ENCODE measurements at regions of chr7 and their contacts with region 1.

Region 1: DNA sequence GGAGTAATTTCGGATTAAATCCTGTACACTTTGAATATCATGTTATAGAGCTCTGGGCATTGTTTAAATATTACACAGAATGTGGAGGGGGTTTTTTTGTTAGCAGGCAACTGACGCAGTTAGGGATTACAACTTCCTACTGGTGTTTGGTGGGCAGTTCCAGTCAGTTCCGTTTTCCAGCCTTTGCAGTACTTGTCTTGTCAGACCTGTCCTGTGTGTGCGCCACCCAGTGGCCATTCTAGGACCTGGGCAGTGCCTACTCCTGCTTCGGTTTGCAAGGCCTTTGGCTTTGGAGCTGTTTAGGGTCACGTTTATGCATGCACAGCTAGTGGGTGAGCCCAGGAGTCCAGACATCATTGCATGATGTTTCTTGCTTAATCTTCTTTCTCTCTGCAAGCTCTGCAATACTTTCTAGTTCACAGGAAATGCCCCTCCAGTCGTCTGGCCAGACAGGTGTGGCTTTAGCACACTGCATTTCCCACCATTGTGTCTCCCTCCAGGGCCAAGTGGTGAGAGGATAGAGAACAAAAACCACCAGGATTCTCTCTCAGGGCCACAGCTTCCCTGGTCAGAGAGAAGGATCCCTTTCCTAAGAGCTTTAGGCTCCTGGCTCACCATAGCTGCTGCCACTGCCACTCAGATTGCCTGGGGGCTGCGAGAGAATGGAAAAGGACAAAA is 96.5 kb upstream of the TARP start:
- DNase-seq: no peak
- ATAC-seq: peak; percentile 87
- H3K4me3 ChIP-seq: no peak overlapping the region
- H3K27ac ChIP-seq: peak overlapping the region; percentile 22; the same call in 1 of the 2 replicates
- H3K4me1 ChIP-seq: peaks cover 31% of the 10 kb centered on the region
- H3K27me3 ChIP-seq: no peaks in the 10 kb centered on the region
- CTCF ChIP-seq: peak; percentile 81 to 99 (median 96)
- EP300 ChIP-seq: no peak
- POLR2A ChIP-seq: no peak
- RAD21 ChIP-seq: no peak

Region 2: GRCh38 chr7:37901236-37901827 is 468.6 kb before region 1 on chr7:
- CTCF ChIA-PET with region 1: interaction called, 10 read pairs
- POLR2A ChIA-PET with region 1: no interaction called
- RAD21 ChIA-PET with region 1: interaction called, 4 read pairs
- SMC1A ChIA-PET with region 1: interaction called, 3 read pairs
- in situ Hi-C with region 1: no loop called
- intact Hi-C with region 1: no loop called
- DNase-seq: no peak
- ATAC-seq: peak; percentile 78
- H3K4me3 ChIP-seq: no peak overlapping the region
- H3K27ac ChIP-seq: no peak overlapping the region
- H3K4me1 ChIP-seq: no peaks in the 10 kb centered on the region
- H3K27me3 ChIP-seq: peaks cover 0 to 2% of the 10 kb centered on the region in 2 experiments; a peak in 1 of 4 replicates
- CTCF ChIP-seq: peak; percentile 47 to 59 (median 50); a peak in 5 of 6 replicates
- EP300 ChIP-seq: no peak
- POLR2A ChIP-seq: no peak
- RAD21 ChIP-seq: peak; percentile 64

Region 3: GRCh38 chr7:38222481-38223096 is 147.4 kb before region 1 on chr7:
- CTCF ChIA-PET with region 1: interaction called, 85 read pairs
- POLR2A ChIA-PET with region 1: no interaction called
- RAD21 ChIA-PET with region 1: interaction called, 3 read pairs
- SMC1A ChIA-PET with region 1: interaction called, 6 read pairs
- in situ Hi-C with region 1: no loop called
- intact Hi-C with region 1: no loop called
- DNase-seq: peak; percentile 34
- ATAC-seq: peak; percentile 87
- H3K4me3 ChIP-seq: no peak overlapping the region
- H3K27ac ChIP-seq: no peak overlapping the region
- H3K4me1 ChIP-seq: no peaks in the 10 kb centered on the region
- H3K27me3 ChIP-seq: no peaks in the 10 kb centered on the region
- CTCF ChIP-seq: peak; percentile 72 to 79 (median 79)
- EP300 ChIP-seq: no peak
- POLR2A ChIP-seq: no peak
- RAD21 ChIP-seq: peak; percentile 97

Region 4: DNA sequence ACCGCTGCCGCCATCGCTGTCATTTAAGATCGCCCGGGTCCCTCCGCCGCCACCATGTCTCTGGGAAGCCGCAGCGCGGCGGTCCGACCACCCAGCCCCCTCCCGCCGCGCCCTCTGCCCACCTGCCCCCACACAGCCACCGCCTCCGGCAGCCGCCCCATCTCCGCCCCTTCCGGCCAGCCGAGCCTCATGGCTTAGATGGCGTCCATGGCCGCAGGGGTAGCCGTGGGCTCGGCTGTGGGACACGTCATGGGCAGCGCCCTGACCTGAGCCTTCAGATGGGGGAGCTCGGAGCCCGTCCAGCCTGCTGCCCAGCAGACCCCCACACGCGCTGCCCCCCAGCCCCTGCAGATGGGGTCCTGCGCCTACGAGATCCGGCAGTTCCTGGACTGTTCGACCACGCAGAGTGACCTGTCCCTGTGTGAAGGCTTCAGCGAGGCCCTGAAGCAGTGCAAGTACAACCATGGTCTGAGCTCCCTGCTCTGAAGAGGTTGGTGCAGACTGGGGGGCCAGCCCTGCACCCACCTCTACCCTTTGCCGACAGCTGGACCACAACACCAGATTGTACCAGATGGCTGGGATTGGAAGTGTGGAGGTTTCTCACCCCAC is 58.5 kb before region 1 on chr7:
- CTCF ChIA-PET with region 1: interaction called, 14 read pairs
- POLR2A ChIA-PET with region 1: no interaction called
- RAD21 ChIA-PET with region 1: interaction called, 3 read pairs
- SMC1A ChIA-PET with region 1: interaction called, 3 read pairs
- in situ Hi-C with region 1: no loop called
- intact Hi-C with region 1: no loop called
- DNase-seq: no peak
- ATAC-seq: peak; percentile 95
- H3K4me3 ChIP-seq: peak overlapping the region; percentile 71
- H3K27ac ChIP-seq: peak overlapping the region; percentile 35; the same call in 1 of the 2 replicates
- H3K4me1 ChIP-seq: peaks cover 20% of the 10 kb centered on the region
- H3K27me3 ChIP-seq: no peaks in the 10 kb centered on the region
- CTCF ChIP-seq: no peak
- EP300 ChIP-seq: no peak
- POLR2A ChIP-seq: peak; percentile 89
- RAD21 ChIP-seq: no peak

Region 5: GRCh38 chr7:38351601-38352000 is 18.4 kb before region 1 on chr7:
- CTCF ChIA-PET with region 1: interaction called, 61 read pairs
- POLR2A ChIA-PET with region 1: no interaction called
- RAD21 ChIA-PET with region 1: interaction called, 3 read pairs
- SMC1A ChIA-PET with region 1: interaction called, 5 read pairs
- in situ Hi-C with region 1: no loop called
- intact Hi-C with region 1: no loop called
- DNase-seq: no peak
- ATAC-seq: no peak
- H3K4me3 ChIP-seq: peak overlapping the region; percentile 16; the same call in 1 of the 2 replicates
- H3K27ac ChIP-seq: no peak overlapping the region
- H3K4me1 ChIP-seq: no peaks in the 10 kb centered on the region
- H3K27me3 ChIP-seq: no peaks in the 10 kb centered on the region
- CTCF ChIP-seq: no peak
- EP300 ChIP-seq: no peak
- POLR2A ChIP-seq: no peak
- RAD21 ChIP-seq: no peak

Region 6: DNA sequence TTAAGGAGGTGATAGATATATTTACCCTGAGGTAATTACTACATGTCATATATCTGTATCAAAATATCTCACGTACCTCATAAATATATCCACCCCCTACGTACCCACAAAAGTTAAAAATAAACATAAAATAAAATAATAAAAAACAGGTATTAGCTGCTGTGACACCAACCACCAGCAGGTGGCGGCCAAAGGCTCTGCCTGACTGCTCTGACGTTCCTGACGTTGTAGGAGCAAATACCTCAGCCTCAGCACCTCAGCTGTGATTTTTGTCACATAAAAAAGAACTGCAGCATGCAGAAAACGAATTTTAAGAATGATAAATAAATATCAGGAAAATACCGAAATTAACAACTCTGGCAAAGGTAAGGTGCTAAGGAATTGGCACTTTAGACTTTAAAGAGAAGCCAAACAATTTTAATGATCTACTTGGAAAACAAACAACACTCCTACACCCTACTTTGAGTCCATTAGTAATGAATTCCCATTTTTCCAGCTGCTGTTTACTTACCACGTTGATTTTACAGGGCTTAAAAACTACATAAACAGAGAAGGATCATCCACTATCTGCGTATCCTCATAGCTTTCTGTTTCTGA is 28.9 kb after region 1 on chr7:
- CTCF ChIA-PET with region 1: interaction called, 13 read pairs
- POLR2A ChIA-PET with region 1: no interaction called
- RAD21 ChIA-PET with region 1: interaction called, 4 read pairs
- SMC1A ChIA-PET with region 1: no interaction called
- in situ Hi-C with region 1: no loop called
- intact Hi-C with region 1: no loop called
- DNase-seq: no peak
- ATAC-seq: peak; percentile 80
- H3K4me3 ChIP-seq: no peak overlapping the region
- H3K27ac ChIP-seq: no peak overlapping the region
- H3K4me1 ChIP-seq: peaks cover 10% of the 10 kb centered on the region
- H3K27me3 ChIP-seq: no peaks in the 10 kb centered on the region
- CTCF ChIP-seq: peak; percentile 84 to 90 (median 86)
- EP300 ChIP-seq: no peak
- POLR2A ChIP-seq: no peak
- RAD21 ChIP-seq: peak; percentile 86

Region 7: GRCh38 chr7:38796626-38797501 is 426.9 kb after region 1 on chr7:
- CTCF ChIA-PET with region 1: no interaction called
- POLR2A ChIA-PET with region 1: no interaction called
- RAD21 ChIA-PET with region 1: no interaction called
- SMC1A ChIA-PET with region 1: no interaction called
- in situ Hi-C with region 1: no loop called
- intact Hi-C with region 1: no loop called
- DNase-seq: peak; percentile 15
- ATAC-seq: 0 out of 3 replicates have a peak, but pooled peaks have one; percentile 39
- H3K4me3 ChIP-seq: no peak overlapping the region
- H3K27ac ChIP-seq: no peak overlapping the region
- H3K4me1 ChIP-seq: no peaks in the 10 kb centered on the region
- H3K27me3 ChIP-seq: no peaks in the 10 kb centered on the region
- CTCF ChIP-seq: peak; percentile 53 to 76 (median 61); a peak in 5 of 6 replicates
- EP300 ChIP-seq: no peak
- POLR2A ChIP-seq: no peak
- RAD21 ChIP-seq: peak; percentile 91

Region 8: GRCh38 chr7:39732837-39733804 is 1363.2 kb after region 1 on chr7:
- CTCF ChIA-PET with region 1: no interaction called
- POLR2A ChIA-PET with region 1: no interaction called
- RAD21 ChIA-PET with region 1: no interaction called
- SMC1A ChIA-PET with region 1: no interaction called
- in situ Hi-C with region 1: loop called (anchors 25 kb)
- intact Hi-C with region 1: no loop called
- DNase-seq: peak; percentile 95
- ATAC-seq: peak; percentile 93
- H3K4me3 ChIP-seq: peak overlapping the region; percentile 77
- H3K27ac ChIP-seq: peak overlapping the region; percentile 80
- H3K4me1 ChIP-seq: peaks cover 10% of the 10 kb centered on the region
- H3K27me3 ChIP-seq: no peaks in the 10 kb centered on the region
- CTCF ChIP-seq: no peak
- EP300 ChIP-seq: peak; percentile 56 to 79
- POLR2A ChIP-seq: peak; percentile 91
- RAD21 ChIP-seq: peak; percentile 4; the same call in 1 of the 2 replicates